ENCODE measurements at regions of chr19 and their contacts with region 1.

Region 1: DNA sequence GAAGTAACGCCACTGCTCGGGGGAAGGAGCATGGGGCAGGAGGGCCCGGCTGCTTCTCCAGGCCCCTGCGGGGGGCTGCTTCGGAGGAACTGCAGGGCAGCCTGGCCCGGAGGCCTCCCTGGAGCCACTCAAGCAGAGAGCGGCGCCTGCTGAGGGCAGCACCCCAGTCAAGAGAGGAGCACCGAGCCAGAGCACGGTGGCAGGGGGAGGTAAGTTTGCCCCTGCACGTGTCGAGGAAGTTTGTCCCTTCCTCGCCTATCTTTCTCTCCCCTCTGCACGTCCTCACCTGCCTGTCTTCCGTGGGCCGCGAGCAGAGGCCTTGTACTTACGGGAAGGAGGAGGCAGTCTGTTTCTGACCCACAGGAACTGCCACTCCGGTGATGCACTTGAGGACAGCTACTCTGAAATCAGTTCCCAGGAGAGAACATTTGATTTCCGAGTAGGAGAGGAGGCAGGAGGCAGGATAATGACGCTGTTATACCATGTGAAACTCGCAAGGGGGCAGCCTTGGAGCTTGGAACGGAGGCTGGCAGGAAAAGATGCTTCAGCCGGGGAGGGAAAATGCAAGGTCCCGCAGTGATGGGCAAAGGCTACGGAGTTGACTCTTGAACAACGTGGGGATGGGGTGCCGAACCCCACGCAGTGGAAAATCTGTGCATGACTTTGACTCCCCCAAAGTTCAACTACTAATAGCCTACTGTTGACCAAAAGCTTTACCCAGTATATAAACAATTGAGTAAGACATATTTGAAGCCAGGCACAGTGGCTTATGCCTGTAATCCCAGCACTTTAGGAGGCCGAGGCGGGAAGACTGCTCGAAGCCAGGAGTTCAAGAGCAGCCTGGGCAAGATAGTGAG is 5.0 kb downstream of the FFAR1 start:
- DNase-seq: peak; percentile 73
- ATAC-seq: peak; percentile 54
- H3K4me3 ChIP-seq: no peak overlapping the region
- H3K27ac ChIP-seq: no peak overlapping the region; the same call in 1 of the 2 replicates
- H3K4me1 ChIP-seq: peaks cover 44% of the 10 kb centered on the region
- H3K27me3 ChIP-seq: no peaks in the 10 kb centered on the region
- CTCF ChIP-seq: peak; percentile 82 to 95 (median 86); a peak in 5 of 6 replicates
- EP300 ChIP-seq: no peak
- POLR2A ChIP-seq: peak; percentile 33; the same call in 1 of the 2 replicates
- RAD21 ChIP-seq: peak; percentile 100

Region 2: GRCh38 chr19:35177377-35178274 is 175.1 kb before region 1 on chr19:
- CTCF ChIA-PET with region 1: no interaction called
- POLR2A ChIA-PET with region 1: no interaction called
- RAD21 ChIA-PET with region 1: no interaction called
- SMC1A ChIA-PET with region 1: no interaction called
- in situ Hi-C with region 1: no loop called
- intact Hi-C with region 1: no loop called
- DNase-seq: no peak
- ATAC-seq: no peak
- H3K4me3 ChIP-seq: no peak overlapping the region
- H3K27ac ChIP-seq: no peak overlapping the region
- H3K4me1 ChIP-seq: no peaks in the 10 kb centered on the region
- H3K27me3 ChIP-seq: no peaks in the 10 kb centered on the region
- CTCF ChIP-seq: no peak
- EP300 ChIP-seq: no peak
- POLR2A ChIP-seq: no peak
- RAD21 ChIP-seq: no peak

Region 3: DNA sequence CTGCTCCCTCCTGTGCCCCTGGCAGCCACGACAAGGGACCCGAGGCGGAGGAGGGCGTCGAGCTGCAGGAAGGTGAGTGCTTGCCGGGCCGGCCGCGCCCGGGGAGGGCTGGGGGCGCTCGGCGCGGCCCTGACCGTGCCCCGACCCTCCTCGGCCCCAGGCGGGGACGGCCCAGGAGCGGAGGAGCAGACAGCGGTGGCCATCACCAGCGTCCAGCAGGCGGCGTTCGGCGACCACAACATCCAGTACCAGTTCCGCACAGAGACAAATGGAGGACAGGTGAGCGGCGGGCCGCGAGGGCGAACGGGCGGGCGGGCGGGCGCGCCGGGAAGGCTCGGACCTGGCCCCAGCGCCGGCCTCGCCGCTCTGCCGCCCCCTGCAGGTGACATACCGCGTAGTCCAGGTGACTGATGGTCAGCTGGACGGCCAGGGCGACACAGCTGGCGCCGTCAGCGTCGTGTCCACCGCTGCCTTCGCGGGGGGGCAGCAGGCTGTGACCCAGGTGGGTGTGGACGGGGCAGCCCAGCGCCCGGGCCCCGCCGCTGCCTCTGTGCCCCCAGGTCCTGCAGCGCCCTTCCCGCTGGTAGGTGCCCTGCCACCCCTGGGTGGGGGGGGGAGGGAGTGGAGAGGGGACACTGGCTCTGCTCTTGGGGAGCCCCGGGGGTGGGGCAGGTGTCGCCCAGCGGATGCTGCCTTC is 83.1 kb before region 1 on chr19:
- CTCF ChIA-PET with region 1: interaction called, 12 read pairs
- POLR2A ChIA-PET with region 1: interaction called, 3 read pairs
- RAD21 ChIA-PET with region 1: interaction called, 5 read pairs
- SMC1A ChIA-PET with region 1: interaction called, 7 read pairs
- in situ Hi-C with region 1: no loop called
- intact Hi-C with region 1: loop called (anchors 5 kb)
- DNase-seq: peak; percentile 51
- ATAC-seq: peak; percentile 86
- H3K4me3 ChIP-seq: peak overlapping the region; percentile 71
- H3K27ac ChIP-seq: peak overlapping the region; percentile 83
- H3K4me1 ChIP-seq: peaks cover 17% of the 10 kb centered on the region
- H3K27me3 ChIP-seq: no peaks in the 10 kb centered on the region
- CTCF ChIP-seq: peak; percentile 39 to 66 (median 66)
- EP300 ChIP-seq: no peak
- POLR2A ChIP-seq: peak; percentile 71
- RAD21 ChIP-seq: peak; percentile 70

Region 4: DNA sequence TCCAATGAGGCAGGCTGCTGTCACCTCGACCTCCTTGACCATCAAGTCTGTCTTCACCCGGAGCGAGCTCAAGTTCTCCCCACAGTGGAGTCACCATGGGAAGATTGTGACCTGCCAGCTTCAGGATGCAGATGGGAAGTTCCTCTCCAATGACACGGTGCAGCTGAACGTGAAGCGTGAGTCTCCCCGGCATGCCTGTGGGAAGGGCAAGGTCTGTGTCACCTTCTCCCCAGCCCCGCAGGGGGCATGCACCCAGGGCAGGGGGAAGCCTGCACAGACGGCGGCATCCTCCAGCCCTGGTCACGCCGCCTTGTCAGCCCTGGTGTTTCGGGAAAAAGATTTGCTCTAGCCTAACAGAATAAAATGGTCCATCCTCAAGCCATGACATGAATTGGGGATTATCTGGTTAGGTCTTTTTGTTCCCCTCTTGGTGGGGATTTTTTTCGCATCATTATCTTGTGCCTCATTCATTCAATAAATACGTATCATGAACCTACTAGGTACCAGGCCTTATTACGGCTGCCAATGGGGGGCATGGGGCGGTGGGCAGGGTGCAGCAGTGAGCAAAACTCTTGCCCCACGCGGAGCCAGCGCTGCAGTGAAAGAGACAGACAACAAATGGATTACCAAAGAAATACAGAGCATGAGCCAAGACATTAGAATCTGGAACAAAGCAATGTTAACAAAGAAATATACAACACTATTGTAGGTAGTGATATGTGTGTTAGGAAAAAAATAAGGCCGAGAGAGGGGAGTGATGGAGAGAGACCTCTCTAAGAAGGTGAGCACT is 16.3 kb before region 1 on chr19:
- CTCF ChIA-PET with region 1: interaction called, 61 read pairs
- POLR2A ChIA-PET with region 1: interaction called, 135 read pairs
- RAD21 ChIA-PET with region 1: interaction called, 127 read pairs
- SMC1A ChIA-PET with region 1: interaction called, 152 read pairs
- in situ Hi-C with region 1: no loop called
- intact Hi-C with region 1: loop called (anchors 2 kb)
- DNase-seq: no peak
- ATAC-seq: no peak
- H3K4me3 ChIP-seq: peak overlapping the region; percentile 49; the same call in 1 of the 2 replicates
- H3K27ac ChIP-seq: peak overlapping the region; percentile 93; the same call in 1 of the 2 replicates
- H3K4me1 ChIP-seq: peaks cover 48% of the 10 kb centered on the region
- H3K27me3 ChIP-seq: no peaks in the 10 kb centered on the region
- CTCF ChIP-seq: no peak
- EP300 ChIP-seq: no peak
- POLR2A ChIP-seq: peak; percentile 71
- RAD21 ChIP-seq: no peak

Region 5: GRCh38 chr19:35417713-35418534 is 65.2 kb after region 1 on chr19:
- CTCF ChIA-PET with region 1: interaction called, 51 read pairs
- POLR2A ChIA-PET with region 1: interaction called, 30 read pairs
- RAD21 ChIA-PET with region 1: interaction called, 80 read pairs
- SMC1A ChIA-PET with region 1: interaction called, 86 read pairs
- in situ Hi-C with region 1: no loop called
- intact Hi-C with region 1: loop called (anchors 2 kb)
- DNase-seq: peak; percentile 88
- ATAC-seq: peak; percentile 63
- H3K4me3 ChIP-seq: no peak overlapping the region; the same call in 1 of the 2 replicates
- H3K27ac ChIP-seq: peak overlapping the region; percentile 68
- H3K4me1 ChIP-seq: peaks cover 41% of the 10 kb centered on the region
- H3K27me3 ChIP-seq: no peaks in the 10 kb centered on the region
- CTCF ChIP-seq: no peak
- EP300 ChIP-seq: peak; percentile 55 to 60; a peak in 2 of 4 replicates
- POLR2A ChIP-seq: no peak
- RAD21 ChIP-seq: peak; percentile 15; the same call in 1 of the 2 replicates

Region 6: DNA sequence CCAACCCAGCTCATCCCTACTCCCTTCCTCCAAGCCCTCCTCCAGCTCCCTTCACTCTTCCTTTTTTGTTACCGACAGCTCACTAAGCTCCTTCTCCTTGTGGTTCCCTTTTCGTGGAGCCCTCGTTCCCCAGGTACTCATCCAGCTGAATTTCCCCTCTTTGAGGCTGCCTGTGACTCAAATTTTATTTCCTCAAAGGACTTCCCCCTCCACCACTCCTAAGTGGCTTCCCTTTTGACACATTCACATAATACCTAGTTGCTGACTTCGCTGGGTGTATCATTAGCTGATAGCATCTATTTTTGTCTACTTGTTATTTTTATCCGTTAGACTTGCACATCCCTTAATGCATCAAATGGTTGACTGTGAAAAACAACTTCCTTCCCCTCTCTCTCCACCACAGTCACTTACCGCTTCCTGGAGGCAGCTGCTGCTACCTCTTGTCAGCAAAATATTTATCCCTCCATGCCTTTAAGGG is 109.8 kb after region 1 on chr19:
- CTCF ChIA-PET with region 1: interaction called, 168 read pairs
- POLR2A ChIA-PET with region 1: interaction called, 35 read pairs
- RAD21 ChIA-PET with region 1: interaction called, 143 read pairs
- SMC1A ChIA-PET with region 1: interaction called, 134 read pairs
- in situ Hi-C with region 1: loop called (anchors 5 kb)
- intact Hi-C with region 1: no loop called
- DNase-seq: peak; percentile 96
- ATAC-seq: peak; percentile 79
- H3K4me3 ChIP-seq: peak overlapping the region; percentile 33; the same call in 1 of the 2 replicates
- H3K27ac ChIP-seq: peak overlapping the region; percentile 73
- H3K4me1 ChIP-seq: peaks cover 56% of the 10 kb centered on the region
- H3K27me3 ChIP-seq: no peaks in the 10 kb centered on the region
- CTCF ChIP-seq: peak in 1 of 3 experiments; percentile 42; a peak in 2 of 6 replicates
- EP300 ChIP-seq: peak; percentile 92 to 97
- POLR2A ChIP-seq: no peak
- RAD21 ChIP-seq: peak; percentile 65

Region 7: DNA sequence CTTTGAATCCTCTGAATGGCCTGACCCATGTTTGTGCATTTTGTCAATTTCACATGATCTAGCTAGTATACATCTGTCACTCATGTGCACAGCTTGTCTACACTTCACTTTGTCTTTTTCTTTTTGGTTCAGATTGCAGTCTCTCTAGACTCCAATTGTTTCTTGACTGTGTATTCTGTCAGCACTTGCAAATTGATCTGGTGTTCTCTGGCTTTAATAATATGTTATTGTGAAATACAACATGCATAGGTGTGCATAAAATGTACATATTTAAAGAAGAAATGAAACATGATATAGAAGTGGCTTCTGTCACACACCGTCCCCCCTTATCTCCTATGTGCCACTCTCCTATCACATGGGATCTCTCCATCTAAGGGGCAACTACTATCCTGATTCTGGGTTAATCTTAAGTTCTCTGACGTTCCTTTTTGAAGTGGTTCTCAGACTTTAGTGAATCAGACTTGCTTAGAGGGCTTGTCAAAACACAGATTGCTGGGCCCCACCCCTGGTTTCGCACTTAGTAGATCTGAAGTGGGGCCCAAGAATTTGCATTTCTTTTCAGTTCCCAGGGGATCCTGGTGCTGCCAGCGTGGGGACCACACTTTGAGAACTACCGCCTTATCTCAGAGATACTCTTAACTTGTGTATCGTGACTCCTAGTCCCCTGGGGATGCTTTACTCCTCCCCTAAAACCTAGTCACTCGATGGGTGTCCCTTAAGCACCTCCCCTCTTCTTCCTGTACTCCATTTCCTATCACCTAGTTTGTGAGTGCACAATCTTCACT is 131.8 kb after region 1 on chr19:
- CTCF ChIA-PET with region 1: interaction called, 8 read pairs
- POLR2A ChIA-PET with region 1: no interaction called
- RAD21 ChIA-PET with region 1: interaction called, 4 read pairs
- SMC1A ChIA-PET with region 1: interaction called, 10 read pairs
- in situ Hi-C with region 1: no loop called
- intact Hi-C with region 1: no loop called
- DNase-seq: peak; percentile 85
- ATAC-seq: peak; percentile 99
- H3K4me3 ChIP-seq: no peak overlapping the region
- H3K27ac ChIP-seq: 0 out of 2 replicates have a peak overlapping the region, but pooled peaks have one; percentile 17
- H3K4me1 ChIP-seq: peaks cover 14% of the 10 kb centered on the region
- H3K27me3 ChIP-seq: no peaks in the 10 kb centered on the region
- CTCF ChIP-seq: no peak
- EP300 ChIP-seq: 0 out of 4 replicates have a peak, but pooled peaks of 1 of the 2 experiments have one; percentile 33
- POLR2A ChIP-seq: no peak
- RAD21 ChIP-seq: no peak